IMR-90 (cell line): ENCODE measurements at regions of chr1 and their contacts with region 1.

Region 1: DNA sequence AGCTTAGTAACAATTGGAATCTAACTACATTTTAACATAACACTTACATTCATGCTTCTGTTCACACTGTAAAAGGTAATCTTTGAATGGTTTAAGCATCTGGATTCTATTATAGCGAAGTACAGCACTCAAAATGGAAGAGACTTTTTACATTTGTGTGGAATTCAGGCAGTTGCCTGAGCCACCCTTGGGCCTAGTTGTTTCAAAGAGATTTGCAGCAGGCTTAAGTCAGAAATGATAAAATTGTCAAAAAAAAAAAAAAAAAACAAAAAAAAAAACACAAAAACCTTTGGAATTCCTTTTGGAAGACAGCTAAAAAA is 199.9 kb downstream of the LYPLAL1 start:
- DNase-seq: no peak
- ATAC-seq: no peak
- H3K4me3 ChIP-seq: no peak overlapping the region
- H3K27ac ChIP-seq: no peak overlapping the region
- H3K4me1 ChIP-seq: peaks cover 2% of the 10 kb centered on the region; the same call in 1 of the 2 replicates
- H3K27me3 ChIP-seq: no peaks in the 10 kb centered on the region
- CTCF ChIP-seq: no peak
- POLR2A ChIP-seq: no peak
- RAD21 ChIP-seq: no peak

Region 2: GRCh38 chr1:218804014-218804785 is 569.4 kb before region 1 on chr1:
- CTCF ChIA-PET with region 1: no interaction called
- POLR2A ChIA-PET with region 1: interaction called, 14 read pairs
- dilution Hi-C with region 1: no loop called
- in situ Hi-C with region 1: no loop called
- intact Hi-C with region 1: no loop called
- DNase-seq: peak; percentile 32
- ATAC-seq: peak; percentile 21; the same call in 1 of the 2 replicates
- H3K4me3 ChIP-seq: no peak overlapping the region
- H3K27ac ChIP-seq: no peak overlapping the region
- H3K4me1 ChIP-seq: no peaks in the 10 kb centered on the region
- H3K27me3 ChIP-seq: no peaks in the 10 kb centered on the region
- CTCF ChIP-seq: no peak
- POLR2A ChIP-seq: no peak
- RAD21 ChIP-seq: no peak